Left lung (tissue), 14 donors: ENCODE measurements at regions of chr9 and their contacts with region 1.

Region 1: GRCh38 chr9:32968101-32969011 is 33.1 kb downstream of the APTX start:
- DNase-seq: peak in 2 of 4 donors; percentile 39 to 45
- ATAC-seq: peak; percentile 62
- H3K4me3 ChIP-seq: no peak overlapping the region
- H3K27ac ChIP-seq: no peak overlapping the region
- H3K4me1 ChIP-seq: no peaks in the 10 kb centered on the region
- H3K27me3 ChIP-seq: no peaks in the 10 kb centered on the region
- CTCF ChIP-seq: peak; percentile 77 to 84

Region 2: GRCh38 chr9:32589083-32589723 is 379.2 kb before region 1 on chr9:
- intact Hi-C with region 1: loop called in 1 of 2 experiments (anchors 5 kb)
- DNase-seq: peak in 2 of 4 donors; percentile 29 to 31
- ATAC-seq: peak; percentile 85
- H3K4me3 ChIP-seq: no peak overlapping the region
- H3K27ac ChIP-seq: no peak overlapping the region
- H3K4me1 ChIP-seq: no peaks in the 10 kb centered on the region
- H3K27me3 ChIP-seq: peaks cover 0 to 9% of the 10 kb centered on the region in 2 donors
- CTCF ChIP-seq: peak in 1 of 2 donors; percentile 18

Region 3: GRCh38 chr9:33159760-33160127 is 191.4 kb after region 1 on chr9:
- intact Hi-C with region 1: no loop called
- DNase-seq: peak in 1 of 4 donors; percentile 72
- ATAC-seq: peak; percentile 10
- H3K4me3 ChIP-seq: peak overlapping the region in 1 of 2 donors; percentile 14
- H3K27ac ChIP-seq: peak overlapping the region; percentile 98 to 99
- H3K4me1 ChIP-seq: peaks cover 84 to 99% of the 10 kb centered on the region in 2 donors
- H3K27me3 ChIP-seq: no peaks in the 10 kb centered on the region
- CTCF ChIP-seq: no peak